ENCODE measurements at regions of chr16 and their contacts with region 1.

Region 1: GRCh38 chr16:87324411-87325275 is 7.5 kb upstream of the C16orf95 start:
- DNase-seq: peak; percentile 20 to 73 (median 39)
- ATAC-seq: peak; percentile 96
- H3K4me3 ChIP-seq: no peak overlapping the region
- H3K4me3 Mint-ChIP-seq: no peak overlapping the region
- H3K27ac ChIP-seq: no peak overlapping the region
- H3K27ac Mint-ChIP-seq: no peak overlapping the region
- H3K4me1 ChIP-seq: peaks cover 6% of the 10 kb centered on the region
- H3K4me1 Mint-ChIP-seq: no peaks in the 10 kb centered on the region
- H3K27me3 ChIP-seq: no peaks in the 10 kb centered on the region
- H3K27me3 Mint-ChIP-seq: no peaks in the 10 kb centered on the region
- CTCF ChIP-seq: peak; percentile 87

Region 2: DNA sequence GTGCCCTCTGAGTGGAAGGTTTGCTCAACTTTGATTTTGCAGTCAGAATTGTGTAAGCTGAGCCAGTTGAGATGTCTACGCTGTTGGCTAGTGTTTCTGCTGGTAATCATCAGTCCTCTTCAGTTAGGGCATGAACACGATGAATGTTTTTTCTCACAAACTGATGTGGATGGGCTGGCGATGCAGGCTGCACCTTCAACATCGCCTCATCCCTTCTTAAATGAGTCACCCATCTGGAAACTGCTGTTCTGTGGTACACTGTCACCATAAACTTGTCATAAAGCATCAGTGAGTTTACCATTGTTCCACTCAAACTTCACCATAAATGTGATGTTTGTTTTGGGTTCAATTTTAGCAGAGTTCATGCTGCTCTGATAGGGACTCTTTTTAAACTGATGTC is 15.8 kb before region 1 on chr16:
- CTCF ChIA-PET with region 1: no interaction called
- POLR2A ChIA-PET with region 1: no interaction called
- intact Hi-C with region 1: no loop called
- DNase-seq: no peak
- ATAC-seq: no peak
- H3K4me3 ChIP-seq: no peak overlapping the region
- H3K4me3 Mint-ChIP-seq: no peak overlapping the region
- H3K27ac ChIP-seq: no peak overlapping the region
- H3K27ac Mint-ChIP-seq: no peak overlapping the region
- H3K4me1 ChIP-seq: no peaks in the 10 kb centered on the region
- H3K4me1 Mint-ChIP-seq: no peaks in the 10 kb centered on the region
- H3K27me3 ChIP-seq: no peaks in the 10 kb centered on the region
- H3K27me3 Mint-ChIP-seq: no peaks in the 10 kb centered on the region
- CTCF ChIP-seq: no peak

Region 3: DNA sequence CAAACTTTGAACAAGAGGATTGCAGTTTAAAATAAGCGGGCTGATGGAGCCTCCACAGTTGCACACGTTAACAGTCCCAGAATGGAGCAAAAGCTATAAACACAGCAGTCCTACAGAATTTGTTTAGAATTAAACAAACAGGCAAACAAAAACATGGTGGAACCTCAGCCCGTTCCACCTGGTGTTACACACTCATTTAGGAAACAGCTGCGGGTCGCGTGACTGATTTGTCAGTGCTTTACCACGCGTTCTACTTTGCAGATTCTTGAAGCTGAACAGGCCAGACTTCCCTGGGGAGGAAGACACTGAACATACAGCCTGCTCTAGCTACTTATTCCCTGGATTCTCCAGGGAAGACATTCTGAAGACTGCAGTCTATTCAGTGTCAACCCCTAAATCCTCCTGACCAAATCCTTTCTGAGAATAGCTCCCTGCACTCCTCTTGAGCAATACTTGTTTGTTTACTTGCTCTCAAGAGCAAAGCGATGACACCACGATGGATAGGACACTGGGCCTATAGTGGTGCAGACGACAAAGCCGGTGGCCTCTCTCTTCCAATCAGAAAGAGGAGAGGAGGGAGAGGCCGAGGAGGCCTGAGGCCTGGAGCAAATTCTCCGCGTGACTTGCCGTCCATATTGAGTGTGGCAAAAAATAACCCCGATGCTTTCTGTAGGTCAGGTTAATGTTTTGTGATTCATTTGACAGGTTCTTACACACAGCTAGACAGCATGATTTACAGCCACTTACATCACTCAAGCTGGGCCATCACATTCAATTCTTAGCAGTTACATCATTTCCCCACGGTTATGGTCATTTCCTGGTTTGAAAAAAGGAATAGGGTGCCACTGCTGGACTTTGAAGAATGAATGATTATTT is 63.5 kb after region 1 on chr16:
- CTCF ChIA-PET with region 1: no interaction called
- POLR2A ChIA-PET with region 1: interaction called, 45 read pairs
- intact Hi-C with region 1: loop called in 1 of 2 experiments (anchors 1 kb)
- DNase-seq: peak; percentile 74 to 97 (median 82)
- ATAC-seq: peak; percentile 71
- H3K4me3 ChIP-seq: peak overlapping the region; percentile 8
- H3K4me3 Mint-ChIP-seq: peak overlapping the region; percentile 79
- H3K27ac ChIP-seq: peak overlapping the region; percentile 70 to 82
- H3K27ac Mint-ChIP-seq: peak overlapping the region; percentile 98
- H3K4me1 ChIP-seq: peaks cover 49% of the 10 kb centered on the region
- H3K4me1 Mint-ChIP-seq: peaks cover 49% of the 10 kb centered on the region
- H3K27me3 ChIP-seq: no peaks in the 10 kb centered on the region
- H3K27me3 Mint-ChIP-seq: peaks cover 4% of the 10 kb centered on the region
- CTCF ChIP-seq: no peak

Region 4: GRCh38 chr16:87393680-87394055 is 69.0 kb after region 1 on chr16:
- CTCF ChIA-PET with region 1: interaction called, 4 read pairs
- POLR2A ChIA-PET with region 1: no interaction called
- intact Hi-C with region 1: loop called (anchors 1 to 2 kb)
- DNase-seq: no peak
- ATAC-seq: no peak
- H3K4me3 ChIP-seq: peak overlapping the region; percentile 84
- H3K4me3 Mint-ChIP-seq: peak overlapping the region; percentile 95
- H3K27ac ChIP-seq: peak overlapping the region in 1 of 2 donors; percentile 57
- H3K27ac Mint-ChIP-seq: peak overlapping the region; percentile 90
- H3K4me1 ChIP-seq: peaks cover 35% of the 10 kb centered on the region
- H3K4me1 Mint-ChIP-seq: peaks cover 50% of the 10 kb centered on the region
- H3K27me3 ChIP-seq: no peaks in the 10 kb centered on the region
- H3K27me3 Mint-ChIP-seq: no peaks in the 10 kb centered on the region
- CTCF ChIP-seq: no peak

Measured in CD4-positive, alpha-beta T cell (primary cell).